ENCODE measurements at regions of chr1 and their contacts with region 1.

Region 1: GRCh38 chr1:59393211-59394180 is 96.6 kb downstream of the FGGY start:
- DNase-seq: peak; percentile 85 to 92 (median 89)
- H3K4me3 ChIP-seq: no peak overlapping the region
- H3K27ac ChIP-seq: peak overlapping the region; percentile 27 to 87
- H3K4me1 ChIP-seq: peaks cover 14% of the 10 kb centered on the region
- H3K27me3 ChIP-seq: no peaks in the 10 kb centered on the region
- CTCF ChIP-seq: no peak
- EP300 ChIP-seq: no peak
- POLR2A ChIP-seq: no peak

Region 2: DNA sequence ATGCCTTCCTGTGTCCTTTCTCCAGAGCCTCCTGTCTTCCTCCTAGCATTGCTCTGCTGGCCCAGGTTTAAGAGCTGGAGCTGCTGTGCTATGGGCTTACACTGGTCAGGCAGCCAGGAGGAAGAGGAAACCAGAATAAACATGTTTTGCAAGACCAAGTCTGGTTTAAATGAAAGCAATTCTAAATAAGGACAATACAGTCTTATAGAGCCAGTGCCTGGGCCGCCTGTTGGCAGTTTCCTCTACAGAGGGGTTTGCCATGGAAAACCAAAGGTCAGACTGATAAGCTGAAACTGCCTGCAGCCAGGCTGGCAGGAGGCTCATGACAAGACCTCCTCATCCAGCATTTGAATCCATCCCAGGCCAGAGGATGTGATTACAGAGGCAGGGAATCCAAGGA is 189.5 kb before region 1 on chr1:
- intact Hi-C with region 1: no loop called
- DNase-seq: no peak
- H3K4me3 ChIP-seq: no peak overlapping the region
- H3K27ac ChIP-seq: no peak overlapping the region
- H3K4me1 ChIP-seq: peaks cover 2% of the 10 kb centered on the region
- H3K27me3 ChIP-seq: no peaks in the 10 kb centered on the region
- CTCF ChIP-seq: no peak
- EP300 ChIP-seq: no peak
- POLR2A ChIP-seq: no peak

Region 3: DNA sequence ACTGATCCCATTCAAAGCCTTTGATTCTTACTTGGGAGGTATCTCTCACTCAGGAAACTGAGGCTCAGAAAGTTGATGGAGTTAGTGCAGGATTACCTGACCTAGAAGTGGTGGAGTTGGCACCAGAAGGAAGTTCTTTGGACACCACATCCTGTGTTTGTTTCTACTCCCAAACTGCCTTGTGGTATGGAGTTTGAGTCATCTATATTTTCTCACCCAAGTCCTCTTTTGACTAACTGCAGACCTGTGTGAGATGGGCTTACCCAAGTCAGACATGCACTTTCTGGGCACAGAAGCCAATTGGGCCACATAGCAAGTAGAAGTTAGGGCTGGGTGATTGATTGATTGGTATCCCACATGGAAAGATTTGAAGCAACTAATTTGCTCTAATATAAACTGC is 60.5 kb before region 1 on chr1:
- intact Hi-C with region 1: no loop called
- DNase-seq: no peak
- H3K4me3 ChIP-seq: no peak overlapping the region
- H3K27ac ChIP-seq: no peak overlapping the region
- H3K4me1 ChIP-seq: no peaks in the 10 kb centered on the region
- H3K27me3 ChIP-seq: no peaks in the 10 kb centered on the region
- CTCF ChIP-seq: no peak
- EP300 ChIP-seq: no peak
- POLR2A ChIP-seq: no peak

Region 4: GRCh38 chr1:59511476-59512465 is 118.3 kb after region 1 on chr1:
- intact Hi-C with region 1: loop called in 1 of 4 experiments (anchors 10 kb)
- DNase-seq: peak in 3 of 5 donors; percentile 36 to 74 (median 50)
- H3K4me3 ChIP-seq: no peak overlapping the region
- H3K27ac ChIP-seq: peak overlapping the region in 1 of 2 donors; percentile 58
- H3K4me1 ChIP-seq: peaks cover 14% of the 10 kb centered on the region
- H3K27me3 ChIP-seq: no peaks in the 10 kb centered on the region
- CTCF ChIP-seq: no peak
- EP300 ChIP-seq: no peak
- POLR2A ChIP-seq: no peak

Region 5: GRCh38 chr1:59601041-59601441 is 207.5 kb after region 1 on chr1:
- intact Hi-C with region 1: no loop called
- DNase-seq: no peak
- H3K4me3 ChIP-seq: no peak overlapping the region
- H3K27ac ChIP-seq: no peak overlapping the region
- H3K4me1 ChIP-seq: peaks cover 3% of the 10 kb centered on the region
- H3K27me3 ChIP-seq: no peaks in the 10 kb centered on the region
- CTCF ChIP-seq: no peak
- EP300 ChIP-seq: no peak
- POLR2A ChIP-seq: no peak